Right ventricle myocardium inferior (tissue), 1 donor: ENCODE measurements at regions of chr11 and their contacts with region 1.

Region 1: GRCh38 chr11:119941636-119942411 is 196.1 kb downstream of the TRIM29 start:
- DNase-seq: no peak
- ATAC-seq: no peak

Region 2: GRCh38 chr11:119892311-119892808 is 49.5 kb before region 1 on chr11:
- intact Hi-C with region 1: loop called (anchors 2 kb)
- DNase-seq: peak; percentile 77
- ATAC-seq: peak; percentile 75

Region 3: DNA sequence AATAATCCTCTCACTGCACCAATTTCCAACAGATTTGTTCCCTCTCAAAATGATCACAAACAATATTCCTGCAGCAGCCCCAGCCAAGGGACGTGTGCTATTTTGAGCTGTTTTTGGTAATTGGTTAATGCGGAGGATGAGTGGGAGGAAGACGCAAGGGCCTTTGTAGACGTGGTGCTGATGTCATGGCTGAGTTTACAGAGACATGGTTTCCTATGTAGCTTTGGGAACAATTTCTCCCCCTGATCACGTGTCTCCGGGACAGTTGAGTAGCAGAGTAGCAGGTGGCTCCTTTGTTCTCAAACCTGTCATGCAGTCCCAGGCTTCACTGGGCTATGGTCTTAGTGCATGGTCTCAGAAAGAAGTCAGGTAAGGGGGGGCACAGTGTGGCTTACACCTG is 29.6 kb before region 1 on chr11:
- intact Hi-C with region 1: no loop called
- DNase-seq: no peak
- ATAC-seq: no peak

Region 4: DNA sequence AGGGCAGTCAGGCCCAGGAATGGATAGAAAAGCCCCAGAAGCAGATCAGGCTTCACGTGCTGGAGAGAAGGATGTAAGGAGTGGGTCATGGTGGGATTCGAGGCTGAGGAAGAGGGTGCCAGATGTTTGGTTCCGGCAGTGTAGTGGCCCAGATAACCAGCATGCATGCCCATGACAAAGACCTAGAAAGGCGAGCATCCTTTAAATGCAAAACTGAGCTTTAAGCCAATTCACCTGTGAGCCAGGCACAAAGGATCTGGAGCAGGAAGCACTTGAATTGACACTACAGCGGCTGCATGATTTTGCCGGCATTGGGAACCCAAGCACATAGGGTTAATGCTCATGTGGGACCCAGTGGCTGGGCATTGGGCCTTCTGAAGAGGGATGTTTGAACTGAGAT is 10.6 kb after region 1 on chr11:
- intact Hi-C with region 1: loop called (anchors 1 kb)
- DNase-seq: no peak
- ATAC-seq: no peak